ENCODE measurements at regions of chr2 and their contacts with region 1.

Region 1: GRCh38 chr2:229714736-229715541 is 584 bp upstream of the DNER start:
- DNase-seq: peak; percentile 70
- H3K4me3 ChIP-seq: peak overlapping the region; percentile 44 to 57
- H3K27ac ChIP-seq: no peak overlapping the region; a peak in 1 of 4 replicates
- H3K4me1 ChIP-seq: peaks cover 0 to 17% of the 10 kb centered on the region in 2 experiments; a peak in 2 of 4 replicates
- H3K27me3 ChIP-seq: peaks cover 26% of the 10 kb centered on the region; the same call in 1 of the 2 replicates
- CTCF ChIP-seq: no peak
- EP300 ChIP-seq: no peak
- RAD21 ChIP-seq: no peak

Region 2: GRCh38 chr2:229431327-229431954 is 283.5 kb before region 1 on chr2:
- CTCF ChIA-PET with region 1: interaction called, 18 read pairs
- POLR2A ChIA-PET with region 1: no interaction called
- DNase-seq: peak; percentile 23
- H3K4me3 ChIP-seq: no peak overlapping the region
- H3K27ac ChIP-seq: no peak overlapping the region
- H3K4me1 ChIP-seq: no peaks in the 10 kb centered on the region
- H3K27me3 ChIP-seq: no peaks in the 10 kb centered on the region
- CTCF ChIP-seq: peak; percentile 76
- EP300 ChIP-seq: no peak
- RAD21 ChIP-seq: peak; percentile 68

Region 3: DNA sequence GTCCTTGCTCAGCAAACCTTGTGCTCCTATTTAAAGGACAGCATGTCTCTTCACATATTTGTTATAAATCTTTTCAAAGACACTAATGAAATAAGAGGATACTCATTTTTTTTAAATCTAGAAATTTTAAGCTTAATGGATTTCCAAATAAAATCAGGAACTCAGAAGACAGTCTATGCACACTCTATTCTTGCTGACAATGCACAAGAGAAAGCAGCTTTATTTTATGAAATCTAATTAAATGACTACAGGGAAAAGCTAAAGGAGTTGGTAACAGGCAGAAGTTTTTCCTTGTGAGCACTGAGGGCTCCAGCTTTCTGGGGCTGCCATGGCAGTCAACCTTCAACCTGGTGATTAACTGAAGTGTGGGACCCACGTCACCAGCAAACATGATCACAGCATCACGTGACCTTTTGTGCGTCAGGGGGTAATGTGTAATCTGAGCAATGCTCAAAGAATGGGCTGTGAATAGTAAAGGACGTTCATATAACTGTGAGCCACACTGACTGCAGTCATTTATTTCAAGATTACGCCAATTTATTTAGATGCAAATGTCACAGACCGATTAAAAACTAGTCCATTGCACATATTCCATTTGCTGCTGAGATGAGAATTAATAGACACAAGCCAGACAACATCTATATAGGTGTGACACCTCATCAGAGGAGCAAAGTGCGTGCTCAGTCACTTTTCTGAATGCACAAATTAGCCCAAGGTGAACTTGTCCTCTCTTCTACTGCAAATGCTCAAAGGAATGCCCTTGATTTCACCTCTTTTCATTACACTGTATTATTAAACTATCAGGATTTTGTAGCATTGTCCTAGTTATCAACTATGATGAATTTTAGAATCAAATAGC is 11.0 kb after region 1 on chr2:
- CTCF ChIA-PET with region 1: interaction called, 12 read pairs
- POLR2A ChIA-PET with region 1: no interaction called
- DNase-seq: no peak
- H3K4me3 ChIP-seq: no peak overlapping the region
- H3K27ac ChIP-seq: no peak overlapping the region
- H3K4me1 ChIP-seq: peaks cover 0 to 2% of the 10 kb centered on the region in 2 experiments; a peak in 1 of 4 replicates
- H3K27me3 ChIP-seq: no peaks in the 10 kb centered on the region
- CTCF ChIP-seq: no peak
- EP300 ChIP-seq: no peak
- RAD21 ChIP-seq: no peak

Region 4: GRCh38 chr2:229869226-229869625 is 154.3 kb after region 1 on chr2:
- CTCF ChIA-PET with region 1: no interaction called
- POLR2A ChIA-PET with region 1: no interaction called
- DNase-seq: no peak
- H3K4me3 ChIP-seq: no peak overlapping the region
- H3K27ac ChIP-seq: no peak overlapping the region
- H3K4me1 ChIP-seq: peaks cover 0 to 4% of the 10 kb centered on the region in 2 experiments; a peak in 3 of 4 replicates
- H3K27me3 ChIP-seq: no peaks in the 10 kb centered on the region
- CTCF ChIP-seq: no peak
- EP300 ChIP-seq: no peak
- RAD21 ChIP-seq: no peak

Measured in SK-N-SH (cell line).